ENCODE measurements at regions of chr1 and their contacts with region 1.

Region 1: DNA sequence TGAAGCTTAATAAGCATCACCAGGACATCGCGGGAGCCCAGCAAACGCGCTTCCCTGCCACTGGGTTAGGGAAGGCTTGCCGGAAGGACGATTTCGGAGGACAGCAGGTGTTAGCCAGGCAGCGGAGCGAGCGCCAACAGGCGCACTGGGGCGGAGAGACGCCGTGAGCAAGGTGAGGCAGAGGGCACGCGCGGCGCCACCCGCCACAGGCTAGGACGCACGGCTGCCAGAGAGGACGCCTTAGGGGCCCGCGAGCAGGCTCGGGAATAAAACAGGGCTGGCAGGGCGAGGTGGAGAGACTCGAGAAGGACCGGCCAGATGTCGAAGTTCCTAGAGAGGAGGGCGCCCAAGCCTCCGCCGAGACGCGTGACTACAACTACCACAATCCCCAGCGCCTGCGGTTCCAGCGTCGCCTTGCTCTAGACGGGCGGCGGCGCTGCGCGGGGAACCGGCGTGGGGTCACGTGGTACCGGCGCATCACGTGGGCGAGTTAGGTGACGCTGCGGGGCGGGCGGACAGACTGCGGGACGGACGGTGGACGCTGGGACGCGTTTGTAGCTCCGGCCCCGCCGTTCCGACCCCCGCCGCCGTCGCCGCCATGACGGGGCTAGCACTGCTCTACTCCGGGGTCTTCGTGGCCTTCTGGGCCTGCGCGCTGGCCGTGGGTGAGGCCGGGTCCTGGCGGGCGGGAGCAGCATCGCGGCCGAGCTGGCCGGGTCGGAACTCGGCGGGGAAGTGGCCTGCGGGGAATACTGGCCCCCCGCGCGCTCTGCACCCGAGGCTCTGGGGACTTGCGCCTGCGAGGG is at the start of gene ATP6V0B:
- DNase-seq: peak; percentile 83 to 96 (median 93)
- ATAC-seq: peak; percentile 69
- H3K4me3 ChIP-seq: peak within 1 kb of the TSS; percentile 95 to 97
- H3K4me3 Mint-ChIP-seq: peak within 1 kb of the TSS; percentile 92
- H3K27ac ChIP-seq: peak within 1 kb of the TSS; percentile 69 to 88
- H3K27ac Mint-ChIP-seq: peak within 1 kb of the TSS; percentile 95
- H3K4me1 ChIP-seq: peaks cover 37% of the 10 kb centered on the region
- H3K4me1 Mint-ChIP-seq: peaks cover 60% of the 10 kb centered on the region
- H3K27me3 ChIP-seq: no peaks in the 10 kb centered on the region
- H3K27me3 Mint-ChIP-seq: peaks cover 2% of the 10 kb centered on the region
- CTCF ChIP-seq: no peak
- total RNA-seq, gene ATP6V0B: 52.0 to 56.3 TPM

Region 2: DNA sequence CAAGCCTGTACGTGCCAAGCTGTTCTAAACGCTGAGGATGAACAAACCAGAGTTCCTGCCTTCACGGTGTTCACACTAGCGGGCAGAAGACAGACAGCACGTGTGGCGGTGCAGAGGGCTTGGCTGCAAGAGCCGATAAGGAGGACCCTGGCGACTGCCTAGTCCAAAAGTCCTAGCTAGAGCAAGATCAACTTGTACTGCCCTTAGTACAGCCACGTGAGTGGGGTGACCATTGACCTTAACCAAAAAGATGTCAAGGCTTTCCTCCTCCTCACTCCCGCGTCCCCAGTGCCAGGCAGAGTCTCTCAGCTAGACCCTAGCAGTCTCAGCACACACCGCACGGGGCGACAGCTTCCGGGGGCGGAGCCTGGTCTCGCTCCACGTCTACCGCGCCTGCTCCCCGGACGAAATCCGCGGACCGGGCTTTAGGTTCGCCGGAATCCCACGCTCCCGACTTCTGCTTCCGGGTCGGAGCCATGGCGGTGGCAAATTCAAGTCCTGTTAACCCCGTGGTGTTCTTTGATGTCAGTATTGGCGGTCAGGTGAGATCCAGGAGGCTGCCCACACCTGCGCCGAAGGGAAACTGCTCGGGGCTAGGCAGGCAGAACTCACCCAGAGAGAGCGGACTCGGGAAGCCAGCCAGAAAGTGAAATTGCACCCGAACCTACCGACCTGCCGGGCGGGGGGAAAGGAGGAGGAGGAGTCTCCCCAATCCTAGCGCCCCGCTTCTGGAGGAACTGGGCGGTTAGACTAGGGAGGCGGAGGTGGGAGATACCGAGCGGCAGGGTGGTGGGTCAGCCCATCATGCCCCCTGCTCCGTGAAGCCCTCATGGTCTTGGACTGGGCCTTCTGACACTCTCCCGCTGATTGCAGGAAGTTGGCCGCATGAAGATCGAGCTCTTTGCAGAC is 1316.4 kb before region 1 on chr1 and contains the start of gene PPIH:
- CTCF ChIA-PET with region 1: no interaction called
- POLR2A ChIA-PET with region 1: no interaction called
- intact Hi-C with region 1: loop called in 1 of 2 experiments (anchors 10 kb)
- DNase-seq: peak; percentile 87 to 97 (median 95)
- ATAC-seq: peak; percentile 98
- H3K4me3 ChIP-seq: peak within 1 kb of the TSS; percentile 78 to 90
- H3K4me3 Mint-ChIP-seq: peak within 1 kb of the TSS; percentile 99
- H3K27ac ChIP-seq: peak within 1 kb of the TSS; percentile 54 to 81
- H3K27ac Mint-ChIP-seq: peak within 1 kb of the TSS; percentile 87
- H3K4me1 ChIP-seq: peaks cover 24% of the 10 kb centered on the region
- H3K4me1 Mint-ChIP-seq: peaks cover 45% of the 10 kb centered on the region
- H3K27me3 ChIP-seq: no peaks in the 10 kb centered on the region
- H3K27me3 Mint-ChIP-seq: no peaks in the 10 kb centered on the region
- CTCF ChIP-seq: no peak
- total RNA-seq, gene PPIH: 31.0 to 33.2 TPM

Region 3: DNA sequence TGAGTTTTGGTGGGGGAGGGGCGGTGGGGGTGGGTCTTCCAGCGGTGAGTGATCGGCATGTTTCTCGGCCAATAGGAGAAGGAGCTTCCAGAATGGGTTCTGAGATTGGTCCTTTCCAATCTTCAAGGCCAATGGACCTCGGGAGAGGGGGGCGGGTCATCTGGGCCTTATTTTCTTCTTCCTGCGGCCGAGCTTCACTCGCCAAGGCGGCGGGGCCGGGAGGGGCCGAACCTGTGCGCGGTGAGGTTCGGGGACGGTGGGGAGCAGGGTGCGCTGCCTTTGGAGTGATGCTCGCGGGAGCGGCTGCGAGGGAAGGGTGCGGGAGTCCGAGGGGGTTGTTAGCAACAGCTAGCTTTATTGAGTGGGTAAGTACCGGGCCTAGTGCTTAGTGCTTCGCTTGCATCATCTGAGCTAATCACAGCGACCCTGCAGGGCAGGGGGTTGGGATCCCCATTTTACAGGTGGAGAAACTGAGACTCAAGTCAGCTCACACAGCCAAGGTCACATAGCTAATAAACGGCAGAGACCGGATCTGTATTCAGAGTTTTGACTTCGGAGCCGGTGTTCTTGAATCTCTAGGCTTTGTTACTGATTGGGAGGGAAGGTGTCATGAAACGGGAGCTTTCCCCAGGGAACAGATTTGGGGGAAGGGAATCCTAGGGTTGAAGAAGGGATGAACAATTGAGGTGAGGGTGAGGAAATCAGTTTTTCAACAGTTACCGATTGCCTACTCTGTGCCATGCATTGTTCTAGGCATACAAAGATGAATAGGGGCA is 324.1 kb before region 1 on chr1:
- CTCF ChIA-PET with region 1: no interaction called
- POLR2A ChIA-PET with region 1: interaction called, 6 read pairs
- intact Hi-C with region 1: loop called in 1 of 2 experiments (anchors 1 kb)
- DNase-seq: peak in 8 of 9 experiments; percentile 74 to 97 (median 89)
- ATAC-seq: peak; percentile 71
- H3K4me3 ChIP-seq: peak overlapping the region; percentile 87 to 92
- H3K4me3 Mint-ChIP-seq: peak overlapping the region; percentile 100
- H3K27ac ChIP-seq: peak overlapping the region; percentile 49 to 86
- H3K27ac Mint-ChIP-seq: peak overlapping the region; percentile 97
- H3K4me1 ChIP-seq: peaks cover 17% of the 10 kb centered on the region
- H3K4me1 Mint-ChIP-seq: peaks cover 41% of the 10 kb centered on the region
- H3K27me3 ChIP-seq: no peaks in the 10 kb centered on the region
- H3K27me3 Mint-ChIP-seq: no peaks in the 10 kb centered on the region
- CTCF ChIP-seq: no peak

Region 4: DNA sequence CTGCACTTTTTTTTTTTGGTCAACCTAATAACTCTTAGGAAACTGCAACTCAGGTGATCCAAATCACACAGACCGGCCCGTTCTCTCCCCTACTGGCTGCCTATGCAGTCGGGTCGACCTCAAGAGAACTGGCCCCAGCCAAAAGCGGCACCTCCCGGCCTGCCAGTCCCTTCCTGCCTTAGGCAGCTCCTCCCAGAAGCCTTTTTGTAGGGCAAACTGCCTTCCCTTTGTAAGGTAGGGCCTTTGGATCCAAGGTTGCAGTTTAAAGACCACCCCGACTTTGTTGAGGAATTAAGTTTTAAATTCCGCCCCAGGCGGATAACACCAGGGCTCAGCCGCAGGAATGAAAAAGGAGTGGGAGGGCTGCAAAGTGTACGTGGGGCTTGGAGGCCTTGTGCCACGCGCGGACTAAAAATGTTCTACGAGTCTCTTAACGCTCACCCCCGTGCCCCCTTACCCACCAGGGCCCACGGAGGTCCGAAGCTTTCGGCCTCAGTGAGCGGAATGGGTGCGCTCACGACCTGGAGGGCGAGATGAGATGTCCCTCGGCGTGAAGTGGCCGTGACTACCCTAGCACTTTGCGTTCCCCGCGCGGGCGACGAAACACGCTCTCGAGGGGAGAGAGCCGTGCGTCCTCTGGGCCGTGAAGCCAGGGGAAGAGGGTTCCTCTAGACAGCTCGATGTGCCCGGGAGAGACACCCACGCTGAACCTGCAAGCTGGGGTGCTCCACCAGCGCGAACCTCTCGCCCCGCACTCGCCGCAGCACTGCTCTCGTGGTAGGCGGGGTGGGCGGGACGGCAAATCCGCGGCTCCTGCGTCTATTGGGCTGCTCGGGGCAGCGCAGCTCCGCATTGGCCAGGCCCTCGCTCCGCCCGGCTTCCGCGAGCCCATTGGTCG is 267.8 kb before region 1 on chr1:
- CTCF ChIA-PET with region 1: no interaction called
- POLR2A ChIA-PET with region 1: no interaction called
- intact Hi-C with region 1: loop called (anchors 1 to 2 kb)
- DNase-seq: peak; percentile 74 to 94 (median 89)
- ATAC-seq: peak; percentile 98
- H3K4me3 ChIP-seq: peak overlapping the region; percentile 80 to 84
- H3K4me3 Mint-ChIP-seq: peak overlapping the region; percentile 87
- H3K27ac ChIP-seq: peak overlapping the region; percentile 46 to 58
- H3K27ac Mint-ChIP-seq: peak overlapping the region; percentile 81
- H3K4me1 ChIP-seq: peaks cover 13% of the 10 kb centered on the region
- H3K4me1 Mint-ChIP-seq: peaks cover 30% of the 10 kb centered on the region
- H3K27me3 ChIP-seq: no peaks in the 10 kb centered on the region
- H3K27me3 Mint-ChIP-seq: no peaks in the 10 kb centered on the region
- CTCF ChIP-seq: no peak

Region 5: GRCh38 chr1:43991476-43992231 is 17.0 kb after region 1 on chr1 and contains the start of gene CCDC24:
- CTCF ChIA-PET with region 1: interaction called, 7 read pairs
- POLR2A ChIA-PET with region 1: interaction called, 7 read pairs
- intact Hi-C with region 1: loop called (anchors 1 kb)
- DNase-seq: peak; percentile 43 to 85 (median 76)
- ATAC-seq: peak; percentile 81
- H3K4me3 ChIP-seq: peak within 1 kb of the TSS; percentile 74 to 81
- H3K4me3 Mint-ChIP-seq: peak within 1 kb of the TSS; percentile 90
- H3K27ac ChIP-seq: peak within 1 kb of the TSS; percentile 33 to 43
- H3K27ac Mint-ChIP-seq: peak within 1 kb of the TSS; percentile 72
- H3K4me1 ChIP-seq: peaks cover 12% of the 10 kb centered on the region
- H3K4me1 Mint-ChIP-seq: peaks cover 8% of the 10 kb centered on the region
- H3K27me3 ChIP-seq: no peaks in the 10 kb centered on the region
- H3K27me3 Mint-ChIP-seq: no peaks in the 10 kb centered on the region
- CTCF ChIP-seq: no peak
- total RNA-seq, gene CCDC24: 0.33 to 0.71 TPM

Region 6: GRCh38 chr1:44029906-44030604 is 55.4 kb after region 1 on chr1:
- CTCF ChIA-PET with region 1: no interaction called
- POLR2A ChIA-PET with region 1: no interaction called
- intact Hi-C with region 1: loop called (anchors 1 to 2 kb)
- DNase-seq: peak; percentile 57 to 90 (median 85)
- ATAC-seq: peak; percentile 78
- H3K4me3 ChIP-seq: peak overlapping the region; percentile 64 to 76
- H3K4me3 Mint-ChIP-seq: peak overlapping the region; percentile 97
- H3K27ac ChIP-seq: peak overlapping the region; percentile 51 to 60
- H3K27ac Mint-ChIP-seq: peak overlapping the region; percentile 95
- H3K4me1 ChIP-seq: peaks cover 12% of the 10 kb centered on the region
- H3K4me1 Mint-ChIP-seq: peaks cover 20% of the 10 kb centered on the region
- H3K27me3 ChIP-seq: no peaks in the 10 kb centered on the region
- H3K27me3 Mint-ChIP-seq: no peaks in the 10 kb centered on the region
- CTCF ChIP-seq: no peak

Region 7: GRCh38 chr1:44674113-44675000 is 699.7 kb after region 1 on chr1 and contains the starts of genes ARMH1 and TMEM53:
- CTCF ChIA-PET with region 1: no interaction called
- POLR2A ChIA-PET with region 1: no interaction called
- intact Hi-C with region 1: loop called in 1 of 2 experiments (anchors 10 kb)
- DNase-seq: peak; percentile 91 to 98 (median 96)
- ATAC-seq: peak; percentile 91
- H3K4me3 ChIP-seq: peak within 1 kb of the TSS; percentile 76 to 88
- H3K4me3 Mint-ChIP-seq: peak within 1 kb of the TSS; percentile 94
- H3K27ac ChIP-seq: peak within 1 kb of the TSS; percentile 81 to 82
- H3K27ac Mint-ChIP-seq: peak within 1 kb of the TSS; percentile 91
- H3K4me1 ChIP-seq: peaks cover 12% of the 10 kb centered on the region
- H3K4me1 Mint-ChIP-seq: peaks cover 25% of the 10 kb centered on the region
- H3K27me3 ChIP-seq: no peaks in the 10 kb centered on the region
- H3K27me3 Mint-ChIP-seq: no peaks in the 10 kb centered on the region
- CTCF ChIP-seq: no peak
- total RNA-seq, gene ARMH1: 117 to 128 TPM
- total RNA-seq, gene TMEM53: 1.2 TPM in 1 of 2 experiments, not detected in the other